AG04449 (cell line): ENCODE measurements at regions of chr15 and their contacts with region 1.

Region 1: DNA sequence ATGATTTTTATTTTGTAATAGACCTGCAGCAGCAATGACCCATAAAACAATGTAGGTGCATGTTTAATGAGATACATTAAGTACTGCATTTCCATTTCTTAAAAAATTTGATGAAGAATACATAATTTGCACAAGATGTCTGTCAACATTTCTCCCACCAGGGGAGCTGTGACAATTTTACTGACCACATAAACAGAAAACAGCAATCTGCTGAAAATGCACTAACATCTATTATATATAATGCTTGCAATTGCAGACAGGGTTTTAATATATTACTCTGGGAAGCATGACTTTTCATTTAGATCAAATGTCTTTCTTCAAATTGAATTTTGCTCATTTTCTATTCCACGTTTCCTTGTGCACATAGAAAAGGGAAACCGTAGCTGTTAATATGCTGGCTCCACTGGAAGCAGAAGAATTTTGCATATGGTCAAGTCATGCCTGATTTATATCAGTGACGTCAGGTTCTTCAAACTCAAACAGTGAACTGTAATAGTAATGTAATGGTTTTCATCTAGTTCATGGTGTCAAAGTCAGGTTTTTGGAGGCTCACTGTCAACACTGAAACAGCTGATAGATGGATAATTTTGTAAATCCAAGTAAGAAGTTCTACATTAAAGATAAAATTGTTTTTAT is 79.8 kb upstream of the IGF1R start:
- DNase-seq: no peak
- H3K4me3 ChIP-seq: no peak overlapping the region
- CTCF ChIP-seq: peak; percentile 19

Region 2: GRCh38 chr15:98556321-98556720 is 12.2 kb before region 1 on chr15:
- CTCF ChIA-PET with region 1: interaction called, 19 read pairs
- POLR2A ChIA-PET with region 1: no interaction called
- DNase-seq: no peak
- H3K4me3 ChIP-seq: no peak overlapping the region
- CTCF ChIP-seq: no peak

Region 3: DNA sequence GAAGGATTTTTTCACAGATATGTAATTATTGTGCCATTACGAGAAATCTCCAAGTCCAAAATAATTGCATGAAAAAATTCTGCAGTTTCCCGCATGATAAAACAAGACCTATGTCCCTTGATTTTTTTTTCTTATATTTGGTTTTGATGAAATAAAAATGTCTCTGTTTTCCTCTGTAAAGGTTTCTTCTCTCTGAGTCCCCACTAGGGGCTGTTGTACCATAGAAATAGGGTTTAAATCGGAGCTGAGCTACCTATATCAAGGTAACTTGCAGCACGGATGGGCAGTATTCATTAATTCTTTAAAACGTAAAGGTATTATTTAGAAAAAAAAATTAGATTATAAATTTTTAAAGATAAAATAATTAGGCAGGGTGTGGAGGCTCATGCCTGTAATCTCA is 13.2 kb after region 1 on chr15:
- CTCF ChIA-PET with region 1: interaction called, 11 read pairs
- POLR2A ChIA-PET with region 1: no interaction called
- DNase-seq: no peak
- H3K4me3 ChIP-seq: no peak overlapping the region
- CTCF ChIP-seq: no peak